Caco-2 (cell line): ENCODE measurements at regions of chr4 and their contacts with region 1.

Region 1: DNA sequence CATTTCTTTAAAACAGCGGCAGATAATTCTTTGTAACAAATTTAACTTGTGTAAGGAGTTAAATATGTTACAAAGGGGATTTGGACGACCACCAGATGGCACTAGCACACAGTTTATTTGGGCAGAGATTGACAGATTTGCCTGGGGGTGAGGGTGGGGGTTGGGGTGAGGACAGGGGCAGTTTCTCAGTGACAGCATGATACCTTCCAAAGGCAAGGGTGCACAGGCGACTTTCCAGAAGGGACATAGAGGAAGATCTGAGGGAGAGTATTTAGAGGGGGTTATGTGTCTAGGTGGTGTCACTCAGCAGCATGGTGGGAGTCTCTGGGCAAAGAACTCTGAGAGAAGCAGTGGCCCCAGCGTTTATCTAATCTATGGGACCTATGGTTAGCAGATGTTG is 9.6 kb upstream of the TMA16 start:
- DNase-seq: peak; percentile 59 to 60
- H3K4me3 ChIP-seq: no peak overlapping the region
- H3K4me3 Mint-ChIP-seq: no peak overlapping the region
- H3K27ac Mint-ChIP-seq: no peak overlapping the region
- H3K4me1 ChIP-seq: no peaks in the 10 kb centered on the region
- H3K4me1 Mint-ChIP-seq: no peaks in the 10 kb centered on the region
- H3K27me3 ChIP-seq: no peaks in the 10 kb centered on the region
- H3K27me3 Mint-ChIP-seq: peaks cover 4% of the 10 kb centered on the region
- CTCF ChIP-seq: peak; percentile 58 to 63

Region 2: DNA sequence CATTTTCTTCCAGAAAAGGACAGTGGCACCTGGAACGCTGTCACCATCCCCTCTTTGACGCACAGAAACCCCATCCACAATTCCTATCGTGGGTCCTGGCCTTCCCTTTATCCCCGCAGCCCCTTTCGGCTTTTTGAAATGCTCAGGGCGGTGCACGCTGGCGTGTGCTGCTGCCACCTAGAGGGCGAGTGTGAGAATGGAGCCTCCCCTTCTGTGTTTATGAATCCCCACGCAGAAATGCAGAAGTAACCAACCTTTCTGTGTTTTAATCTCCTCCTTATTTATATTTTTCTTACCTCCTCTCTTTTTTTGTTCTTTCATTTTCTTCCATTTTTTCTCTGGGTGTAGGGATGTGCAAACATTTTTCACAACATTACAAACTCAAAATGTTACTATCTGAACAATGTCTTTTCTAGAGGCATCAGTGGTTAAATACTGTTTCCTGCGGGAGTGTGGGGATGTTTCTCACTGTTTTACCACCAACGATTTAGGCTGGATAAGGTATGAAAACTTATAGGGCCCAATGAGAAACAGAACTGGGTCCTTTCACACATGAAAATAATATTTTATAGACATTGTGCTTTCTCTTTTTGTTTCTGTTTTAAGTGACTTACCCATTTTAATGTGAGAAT is 59.6 kb after region 1 on chr4:
- CTCF ChIA-PET with region 1: interaction called, 3 read pairs
- POLR2A ChIA-PET with region 1: no interaction called
- intact Hi-C with region 1: loop called (anchors 1 kb)
- DNase-seq: peak; percentile 50 to 55
- H3K4me3 ChIP-seq: no peak overlapping the region
- H3K4me3 Mint-ChIP-seq: no peak overlapping the region
- H3K27ac Mint-ChIP-seq: no peak overlapping the region
- H3K4me1 ChIP-seq: no peaks in the 10 kb centered on the region
- H3K4me1 Mint-ChIP-seq: no peaks in the 10 kb centered on the region
- H3K27me3 ChIP-seq: no peaks in the 10 kb centered on the region
- H3K27me3 Mint-ChIP-seq: no peaks in the 10 kb centered on the region
- CTCF ChIP-seq: peak; percentile 84 to 90

Region 3: DNA sequence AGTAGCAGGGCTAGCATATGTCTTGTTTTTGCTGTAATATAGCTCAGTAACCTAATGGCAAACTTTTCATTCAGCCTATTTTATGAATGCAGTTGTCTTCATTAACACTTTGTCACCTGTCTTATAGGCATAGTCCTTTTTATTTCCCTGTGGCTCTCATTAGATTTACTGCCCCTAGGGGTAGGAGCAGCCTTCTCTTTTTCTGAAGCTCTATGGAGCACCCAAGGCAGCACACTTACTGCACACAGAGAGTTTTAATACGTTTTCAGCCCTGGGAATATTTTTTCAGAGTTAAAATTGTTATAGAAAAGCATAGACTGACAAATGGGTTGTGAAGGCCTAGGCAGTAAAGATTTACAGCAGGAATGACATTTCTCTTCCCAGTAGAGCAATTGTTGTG is 416.4 kb after region 1 on chr4:
- CTCF ChIA-PET with region 1: no interaction called
- POLR2A ChIA-PET with region 1: no interaction called
- intact Hi-C with region 1: no loop called
- DNase-seq: no peak
- H3K4me3 ChIP-seq: no peak overlapping the region
- H3K4me3 Mint-ChIP-seq: no peak overlapping the region
- H3K27ac Mint-ChIP-seq: no peak overlapping the region
- H3K4me1 ChIP-seq: no peaks in the 10 kb centered on the region
- H3K4me1 Mint-ChIP-seq: no peaks in the 10 kb centered on the region
- H3K27me3 ChIP-seq: no peaks in the 10 kb centered on the region
- H3K27me3 Mint-ChIP-seq: no peaks in the 10 kb centered on the region
- CTCF ChIP-seq: no peak

Region 4: GRCh38 chr4:164012396-164013027 is 527.6 kb after region 1 on chr4:
- CTCF ChIA-PET with region 1: no interaction called
- POLR2A ChIA-PET with region 1: no interaction called
- intact Hi-C with region 1: loop called (anchors 5 kb)
- DNase-seq: peak; percentile 40 to 57
- H3K4me3 ChIP-seq: no peak overlapping the region
- H3K4me3 Mint-ChIP-seq: no peak overlapping the region
- H3K27ac Mint-ChIP-seq: no peak overlapping the region
- H3K4me1 ChIP-seq: no peaks in the 10 kb centered on the region
- H3K4me1 Mint-ChIP-seq: no peaks in the 10 kb centered on the region
- H3K27me3 ChIP-seq: no peaks in the 10 kb centered on the region
- H3K27me3 Mint-ChIP-seq: no peaks in the 10 kb centered on the region
- CTCF ChIP-seq: peak; percentile 56 to 77